ENCODE measurements at regions of chr7 and their contacts with region 1.

Region 1: DNA sequence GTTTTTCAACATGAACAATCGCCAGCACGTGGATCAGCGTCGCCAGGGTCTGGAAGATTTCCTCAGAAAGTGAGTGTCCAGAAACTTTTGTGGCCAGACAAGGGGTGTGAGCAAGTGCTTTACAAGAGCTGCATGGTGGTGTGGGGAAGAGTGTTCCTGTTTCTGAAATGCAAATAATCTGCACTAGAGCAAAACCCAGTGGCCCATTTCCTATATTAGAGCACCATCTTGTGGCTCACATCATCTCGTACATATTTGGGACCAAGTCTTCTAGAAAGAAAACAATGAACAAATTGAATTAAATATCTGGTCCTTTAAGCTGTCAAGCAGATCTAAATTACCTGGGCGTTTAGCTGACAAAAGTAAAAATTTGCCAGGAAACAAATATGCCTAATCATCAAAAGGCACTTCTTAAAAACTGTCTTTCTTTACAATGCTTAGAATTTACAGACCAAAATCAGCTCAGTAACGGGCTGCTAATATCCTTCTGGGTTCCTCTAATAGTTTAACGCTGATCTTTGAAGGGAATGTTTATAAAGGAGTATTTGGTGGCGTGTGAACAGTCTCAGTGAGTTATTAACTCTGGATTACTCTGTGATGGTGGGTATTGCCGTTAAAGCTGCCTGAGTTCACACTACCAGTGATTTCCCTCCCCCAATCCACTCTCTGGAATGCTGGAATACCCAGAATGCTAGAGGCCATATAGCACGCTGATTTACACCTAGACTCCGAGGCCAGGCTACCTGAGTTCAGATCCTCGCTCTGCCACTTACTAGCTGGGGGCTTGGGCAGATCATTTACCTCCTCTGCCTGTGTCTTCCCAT is 73.6 kb downstream of the SNX10 start:
- DNase-seq: peak; percentile 72
- H3K4me3 Mint-ChIP-seq: no peak overlapping the region
- H3K27ac Mint-ChIP-seq: no peak overlapping the region
- H3K4me1 Mint-ChIP-seq: no peaks in the 10 kb centered on the region
- H3K27me3 Mint-ChIP-seq: no peaks in the 10 kb centered on the region
- CTCF ChIP-seq: peak; percentile 82

Region 2: GRCh38 chr7:25889765-25890164 is 475.5 kb before region 1 on chr7:
- CTCF ChIA-PET with region 1: interaction called, 183 read pairs
- POLR2A ChIA-PET with region 1: interaction called, 18 read pairs
- intact Hi-C with region 1: loop called (anchors 1 kb)
- DNase-seq: no peak
- H3K4me3 Mint-ChIP-seq: no peak overlapping the region
- H3K27ac Mint-ChIP-seq: no peak overlapping the region
- H3K4me1 Mint-ChIP-seq: peaks cover 5% of the 10 kb centered on the region
- H3K27me3 Mint-ChIP-seq: peaks cover 20% of the 10 kb centered on the region
- CTCF ChIP-seq: no peak

Region 3: DNA sequence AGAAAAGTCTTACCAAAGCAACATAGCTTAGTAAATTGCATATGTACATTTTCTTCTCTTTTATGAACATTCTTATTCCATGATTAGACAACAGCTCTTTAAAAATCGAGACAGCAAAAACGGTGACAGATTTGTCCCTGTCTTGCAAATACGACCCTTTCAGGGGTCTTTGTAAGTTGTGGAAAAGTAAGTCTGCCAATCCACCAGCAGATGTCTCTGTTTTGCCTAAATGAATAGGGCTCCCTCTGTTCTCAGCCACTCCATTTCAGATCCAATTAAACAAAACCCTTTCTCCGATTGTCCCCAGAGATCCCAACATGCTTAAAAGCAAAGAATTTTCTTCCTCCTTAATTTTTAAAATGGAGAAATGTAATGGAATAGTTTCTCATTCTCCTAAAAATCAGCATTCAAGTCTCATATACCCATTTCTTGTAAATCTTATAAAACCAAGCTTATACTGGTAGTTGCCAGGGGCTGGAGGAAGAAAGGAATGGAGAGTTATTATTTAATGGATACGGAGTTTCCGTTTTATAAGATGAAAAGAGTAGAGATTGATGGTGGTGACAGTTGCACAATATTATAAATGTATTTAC is 274.3 kb before region 1 on chr7:
- CTCF ChIA-PET with region 1: interaction called, 45 read pairs
- POLR2A ChIA-PET with region 1: interaction called, 5 read pairs
- intact Hi-C with region 1: loop called (anchors 1 kb)
- DNase-seq: peak; percentile 60
- H3K4me3 Mint-ChIP-seq: no peak overlapping the region
- H3K27ac Mint-ChIP-seq: no peak overlapping the region
- H3K4me1 Mint-ChIP-seq: peaks cover 26% of the 10 kb centered on the region
- H3K27me3 Mint-ChIP-seq: no peaks in the 10 kb centered on the region
- CTCF ChIP-seq: peak; percentile 78

Region 4: DNA sequence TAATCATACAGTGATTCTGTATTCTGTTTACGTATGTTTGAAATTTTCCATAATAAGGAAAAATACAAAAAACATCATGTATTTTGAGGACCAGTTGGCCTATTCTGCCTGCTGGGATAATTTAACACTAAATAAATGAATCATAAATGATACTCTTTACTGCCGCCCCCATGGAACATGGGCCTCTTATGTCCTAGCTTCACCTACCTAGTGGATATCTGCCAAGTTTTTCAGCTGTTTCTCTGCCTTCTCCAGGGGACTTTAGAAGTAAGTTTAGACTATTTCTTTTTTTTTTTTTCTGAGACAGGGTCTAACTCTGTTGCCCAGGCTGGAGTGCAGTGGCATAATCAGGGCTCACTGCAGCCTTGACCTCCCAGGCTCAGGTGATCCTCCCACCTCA is 202.9 kb before region 1 on chr7:
- CTCF ChIA-PET with region 1: no interaction called
- POLR2A ChIA-PET with region 1: no interaction called
- intact Hi-C with region 1: no loop called
- DNase-seq: no peak
- H3K4me3 Mint-ChIP-seq: no peak overlapping the region
- H3K27ac Mint-ChIP-seq: no peak overlapping the region
- H3K4me1 Mint-ChIP-seq: peaks cover 9% of the 10 kb centered on the region
- H3K27me3 Mint-ChIP-seq: no peaks in the 10 kb centered on the region
- CTCF ChIP-seq: no peak

Region 5: GRCh38 chr7:26278770-26279169 is 86.5 kb before region 1 on chr7:
- CTCF ChIA-PET with region 1: interaction called, 4 read pairs
- POLR2A ChIA-PET with region 1: no interaction called
- intact Hi-C with region 1: loop called (anchors 1 kb)
- DNase-seq: peak; percentile 41
- H3K4me3 Mint-ChIP-seq: no peak overlapping the region
- H3K27ac Mint-ChIP-seq: no peak overlapping the region
- H3K4me1 Mint-ChIP-seq: no peaks in the 10 kb centered on the region
- H3K27me3 Mint-ChIP-seq: no peaks in the 10 kb centered on the region
- CTCF ChIP-seq: peak; percentile 33

Region 6: GRCh38 chr7:26375726-26376174 is 10.5 kb after region 1 on chr7:
- CTCF ChIA-PET with region 1: interaction called, 20 read pairs
- POLR2A ChIA-PET with region 1: no interaction called
- intact Hi-C with region 1: no loop called
- DNase-seq: no peak
- H3K4me3 Mint-ChIP-seq: no peak overlapping the region
- H3K27ac Mint-ChIP-seq: no peak overlapping the region
- H3K4me1 Mint-ChIP-seq: peaks cover 5% of the 10 kb centered on the region
- H3K27me3 Mint-ChIP-seq: no peaks in the 10 kb centered on the region
- CTCF ChIP-seq: no peak

Region 7: GRCh38 chr7:26500749-26501352 is 135.6 kb after region 1 on chr7:
- CTCF ChIA-PET with region 1: interaction called, 56 read pairs
- POLR2A ChIA-PET with region 1: interaction called, 4 read pairs
- intact Hi-C with region 1: loop called (anchors 1 kb)
- DNase-seq: peak; percentile 53
- H3K4me3 Mint-ChIP-seq: no peak overlapping the region
- H3K27ac Mint-ChIP-seq: no peak overlapping the region
- H3K4me1 Mint-ChIP-seq: no peaks in the 10 kb centered on the region
- H3K27me3 Mint-ChIP-seq: no peaks in the 10 kb centered on the region
- CTCF ChIP-seq: peak; percentile 52

Region 8: GRCh38 chr7:27143023-27143949 is 778.0 kb after region 1 on chr7 and contains the start of gene HOXA5:
- CTCF ChIA-PET with region 1: interaction called, 23 read pairs
- POLR2A ChIA-PET with region 1: interaction called, 4 read pairs
- intact Hi-C with region 1: loop called (anchors 1 kb)
- DNase-seq: peak; percentile 99
- H3K4me3 Mint-ChIP-seq: peak within 1 kb of the TSS; percentile 100
- H3K27ac Mint-ChIP-seq: peak within 1 kb of the TSS; percentile 99
- H3K4me1 Mint-ChIP-seq: peaks cover 31% of the 10 kb centered on the region
- H3K27me3 Mint-ChIP-seq: no peaks in the 10 kb centered on the region
- CTCF ChIP-seq: peak; percentile 93
- total RNA-seq, gene HOXA5: 7.4 and 8.8 TPM in 2 replicates

Measured in MCF 10A (cell line).